HepG2 (cell line): ENCODE measurements at regions of chr9 and their contacts with region 1.

Region 1: DNA sequence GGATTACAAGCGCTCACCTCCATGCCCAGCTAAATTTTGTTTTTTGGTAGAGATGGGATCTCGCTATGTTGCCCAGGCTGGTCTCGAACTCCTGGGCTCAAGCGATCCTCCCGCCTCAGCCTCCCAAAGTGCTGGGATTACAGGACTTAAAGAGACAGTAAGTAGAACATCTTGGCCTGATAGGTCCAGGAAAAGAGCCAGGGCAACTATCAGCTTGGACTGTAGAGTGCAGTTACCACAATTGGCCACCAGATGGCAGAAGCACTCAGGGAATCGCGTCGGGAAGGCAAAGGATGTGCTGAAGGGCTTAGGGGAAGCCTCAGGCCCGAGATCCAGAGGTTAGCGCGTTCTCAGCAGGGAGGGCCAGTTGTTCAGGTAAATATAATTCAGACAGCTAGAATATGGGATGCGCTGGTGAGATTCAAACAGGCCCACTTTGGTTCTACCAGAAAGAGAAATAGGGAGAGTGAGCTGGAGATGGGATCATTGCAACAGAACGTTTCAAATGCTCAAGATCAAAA is 21.5 kb downstream of the C9orf57 start:
- DNase-seq: peak; percentile 56
- ATAC-seq: peak; percentile 89
- H3K4me3 ChIP-seq: no peak overlapping the region
- H3K27ac ChIP-seq: no peak overlapping the region
- H3K4me1 ChIP-seq: peaks cover 33% of the 10 kb centered on the region
- H3K27me3 ChIP-seq: peaks cover 0 to 9% of the 10 kb centered on the region in 2 experiments; a peak in 1 of 5 replicates
- CTCF ChIP-seq: peak; percentile 99
- EP300 ChIP-seq: no peak
- POLR2A ChIP-seq: no peak
- RAD21 ChIP-seq: peak; percentile 96

Region 2: GRCh38 chr9:71795097-71795813 is 243.7 kb before region 1 on chr9:
- CTCF ChIA-PET with region 1: no interaction called
- POLR2A ChIA-PET with region 1: no interaction called
- in situ Hi-C with region 1: no loop called
- intact Hi-C with region 1: no loop called
- DNase-seq: no peak
- ATAC-seq: no peak
- H3K4me3 ChIP-seq: no peak overlapping the region
- H3K27ac ChIP-seq: no peak overlapping the region
- H3K4me1 ChIP-seq: peaks cover 35% of the 10 kb centered on the region
- H3K27me3 ChIP-seq: no peaks in the 10 kb centered on the region
- CTCF ChIP-seq: no peak
- EP300 ChIP-seq: no peak
- POLR2A ChIP-seq: no peak
- RAD21 ChIP-seq: no peak

Region 3: DNA sequence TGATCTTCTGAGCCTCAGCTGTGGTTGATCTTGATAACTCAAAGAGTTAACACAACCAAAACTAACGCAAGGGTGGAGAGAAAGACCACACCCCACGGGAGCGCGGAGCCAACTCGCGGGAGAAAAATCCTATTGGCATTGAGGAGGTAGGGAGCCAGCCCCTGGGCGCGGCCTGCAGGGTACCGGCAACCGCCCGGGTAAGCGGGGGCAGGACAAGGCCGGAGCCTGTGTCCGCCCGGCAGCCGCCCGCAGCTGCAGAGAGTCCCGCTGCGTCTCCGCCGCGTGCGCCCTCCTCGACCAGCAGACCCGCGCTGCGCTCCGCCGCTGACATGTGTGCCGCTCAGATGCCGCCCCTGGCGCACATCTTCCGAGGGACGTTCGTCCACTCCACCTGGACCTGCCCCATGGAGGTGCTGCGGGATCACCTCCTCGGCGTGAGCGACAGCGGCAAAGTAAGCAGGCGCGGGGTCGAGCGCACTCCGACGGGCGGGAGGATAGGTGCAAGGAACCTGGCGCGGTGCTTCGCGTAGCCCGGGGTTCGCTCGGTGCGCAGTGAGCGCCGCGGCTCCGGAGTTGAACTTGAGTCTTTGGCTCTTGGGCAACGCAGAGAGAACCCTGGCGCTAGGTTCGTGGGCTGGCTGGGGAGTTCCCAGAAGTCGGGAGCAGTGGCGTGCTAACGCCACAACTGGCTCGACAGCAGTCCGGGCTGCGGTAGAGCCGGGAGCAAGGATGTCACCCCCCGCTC is 110.5 kb after region 1 on chr9 and contains the start of gene GDA:
- CTCF ChIA-PET with region 1: no interaction called
- POLR2A ChIA-PET with region 1: no interaction called
- in situ Hi-C with region 1: loop called (anchors 25 kb)
- intact Hi-C with region 1: loop called (anchors 1 kb)
- DNase-seq: no peak
- ATAC-seq: peak; percentile 86
- H3K4me3 ChIP-seq: peak within 1 kb of the TSS in 2 of 3 experiments; percentile 45 to 70; a peak in 4 of 6 replicates
- H3K27ac ChIP-seq: no peak within 1 kb of the TSS
- H3K4me1 ChIP-seq: peaks cover 26% of the 10 kb centered on the region
- H3K27me3 ChIP-seq: peaks cover 1 to 26% of the 10 kb centered on the region in 2 experiments; a peak in 3 of 5 replicates
- CTCF ChIP-seq: peak; percentile 48
- EP300 ChIP-seq: no peak
- POLR2A ChIP-seq: no peak
- RAD21 ChIP-seq: peak; percentile 29; the same call in 1 of the 2 replicates
- total RNA-seq, gene GDA: 0.15 and 0.21 TPM in 2 replicates

Region 4: DNA sequence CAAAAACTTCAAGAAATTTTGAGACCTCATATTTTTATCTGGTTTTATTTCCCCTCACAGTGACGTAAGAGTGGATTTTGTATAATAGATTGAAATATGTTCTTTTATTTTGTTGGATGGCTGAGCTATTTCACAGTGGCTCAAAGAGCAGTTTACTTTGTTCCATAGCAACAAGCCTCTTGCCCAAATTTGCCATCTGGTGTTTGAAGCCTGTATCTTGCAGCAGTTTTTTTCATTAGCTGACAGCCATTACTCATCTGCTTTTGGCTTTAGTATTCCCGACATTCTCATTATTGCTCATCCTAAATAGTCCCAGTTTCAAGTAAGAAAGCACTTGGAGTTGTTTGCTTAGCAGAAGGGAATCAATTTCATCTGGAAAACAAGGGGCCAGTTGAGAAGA is 146.6 kb after region 1 on chr9:
- CTCF ChIA-PET with region 1: no interaction called
- POLR2A ChIA-PET with region 1: no interaction called
- in situ Hi-C with region 1: no loop called
- intact Hi-C with region 1: loop called (anchors 1 kb)
- DNase-seq: no peak
- ATAC-seq: peak; percentile 47; the same call in 2 of the 3 replicates
- H3K4me3 ChIP-seq: no peak overlapping the region
- H3K27ac ChIP-seq: no peak overlapping the region
- H3K4me1 ChIP-seq: no peaks in the 10 kb centered on the region
- H3K27me3 ChIP-seq: no peaks in the 10 kb centered on the region
- CTCF ChIP-seq: no peak
- EP300 ChIP-seq: no peak
- POLR2A ChIP-seq: no peak
- RAD21 ChIP-seq: no peak

Region 5: DNA sequence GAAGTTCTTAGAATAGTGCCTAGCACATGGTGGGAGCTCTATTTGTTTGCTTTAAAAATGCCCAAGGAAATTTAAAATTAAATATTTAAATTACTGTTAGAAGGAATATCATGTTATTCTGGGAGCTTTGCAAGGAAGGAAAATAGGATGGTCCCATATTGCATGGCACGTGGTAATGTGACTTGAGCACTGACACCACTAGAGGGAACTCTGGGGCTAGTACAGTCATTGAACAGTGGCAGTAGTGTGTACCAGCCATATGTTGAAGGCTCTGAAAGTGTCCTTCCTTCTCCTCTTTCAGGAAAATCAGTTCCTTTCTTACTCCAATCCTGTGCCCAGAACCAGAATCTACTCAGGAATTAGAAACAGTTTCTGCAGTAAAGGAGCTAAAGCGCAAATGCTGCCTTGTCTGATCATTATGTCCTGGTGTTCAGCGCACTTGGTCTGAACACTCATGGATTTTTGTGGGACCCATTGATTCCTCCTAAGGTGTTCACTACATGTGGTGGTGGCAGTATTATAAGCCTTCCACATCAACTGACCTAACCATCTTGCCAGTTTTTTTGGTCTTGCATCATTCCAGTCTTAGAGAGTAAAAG is 164.4 kb after region 1 on chr9:
- CTCF ChIA-PET with region 1: interaction called, 3 read pairs
- POLR2A ChIA-PET with region 1: no interaction called
- in situ Hi-C with region 1: no loop called
- intact Hi-C with region 1: loop called (anchors 1 kb)
- DNase-seq: peak; percentile 53
- ATAC-seq: peak; percentile 99
- H3K4me3 ChIP-seq: no peak overlapping the region
- H3K27ac ChIP-seq: no peak overlapping the region
- H3K4me1 ChIP-seq: peaks cover 16% of the 10 kb centered on the region
- H3K27me3 ChIP-seq: no peaks in the 10 kb centered on the region
- CTCF ChIP-seq: peak; percentile 79
- EP300 ChIP-seq: no peak
- POLR2A ChIP-seq: no peak
- RAD21 ChIP-seq: 0 out of 2 replicates have a peak, but pooled peaks have one; percentile 20

Region 6: DNA sequence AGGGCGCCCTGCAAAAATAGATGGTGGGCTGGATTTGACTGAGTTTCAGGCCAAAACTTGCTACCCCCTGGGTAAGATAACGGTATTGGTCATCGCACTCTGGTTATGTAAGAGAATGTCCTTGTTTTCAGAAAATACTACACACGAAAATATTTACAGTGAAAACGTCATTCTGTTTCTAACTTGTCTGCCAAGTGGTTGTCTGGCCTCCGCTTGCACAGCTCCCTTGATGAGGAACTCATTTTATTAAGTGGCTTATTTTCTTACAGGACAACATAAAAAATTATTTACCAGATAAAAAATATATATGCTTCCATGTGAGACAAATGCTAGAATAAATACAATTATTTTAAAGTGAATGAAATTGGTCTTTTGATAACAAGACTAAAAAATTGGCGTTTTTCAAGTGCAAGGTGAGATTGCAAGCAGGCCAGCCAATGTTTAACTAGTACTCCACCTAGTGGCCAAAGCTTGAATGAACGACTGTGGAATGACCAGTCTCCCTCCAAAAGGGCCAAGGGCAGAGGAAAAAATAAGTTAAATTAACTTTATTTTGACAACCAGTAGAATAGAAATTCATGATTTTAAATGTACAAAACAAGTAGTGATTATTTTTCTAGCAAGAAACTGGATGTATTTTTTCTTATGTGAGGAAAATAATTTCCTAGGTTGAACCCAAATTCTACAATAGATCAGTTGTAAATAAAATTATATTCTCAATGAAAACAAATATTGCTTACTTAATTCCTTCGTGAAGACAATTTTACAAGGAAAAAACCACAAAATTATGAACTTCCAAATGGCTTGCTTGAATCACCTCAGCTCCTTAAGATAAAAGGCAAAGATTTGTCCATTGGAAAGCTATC is 232.9 kb after region 1 on chr9:
- CTCF ChIA-PET with region 1: interaction called, 51 read pairs
- POLR2A ChIA-PET with region 1: no interaction called
- in situ Hi-C with region 1: loop called (anchors 5 kb)
- intact Hi-C with region 1: loop called (anchors 1 kb)
- DNase-seq: peak; percentile 46
- ATAC-seq: peak; percentile 73
- H3K4me3 ChIP-seq: no peak overlapping the region
- H3K27ac ChIP-seq: no peak overlapping the region
- H3K4me1 ChIP-seq: no peaks in the 10 kb centered on the region
- H3K27me3 ChIP-seq: no peaks in the 10 kb centered on the region
- CTCF ChIP-seq: peak; percentile 81
- EP300 ChIP-seq: no peak
- POLR2A ChIP-seq: no peak
- RAD21 ChIP-seq: peak; percentile 62; the same call in 1 of the 2 replicates

Region 7: GRCh38 chr9:72592502-72593403 is 553.8 kb after region 1 on chr9:
- CTCF ChIA-PET with region 1: no interaction called
- POLR2A ChIA-PET with region 1: no interaction called
- in situ Hi-C with region 1: loop called (anchors 25 kb)
- intact Hi-C with region 1: loop called (anchors 1 kb)
- DNase-seq: peak; percentile 30
- ATAC-seq: peak; percentile 89
- H3K4me3 ChIP-seq: no peak overlapping the region
- H3K27ac ChIP-seq: no peak overlapping the region
- H3K4me1 ChIP-seq: no peaks in the 10 kb centered on the region
- H3K27me3 ChIP-seq: no peaks in the 10 kb centered on the region; a peak in 1 of 5 replicates
- CTCF ChIP-seq: peak; percentile 78
- EP300 ChIP-seq: no peak
- POLR2A ChIP-seq: no peak
- RAD21 ChIP-seq: peak; percentile 66

Region 8: DNA sequence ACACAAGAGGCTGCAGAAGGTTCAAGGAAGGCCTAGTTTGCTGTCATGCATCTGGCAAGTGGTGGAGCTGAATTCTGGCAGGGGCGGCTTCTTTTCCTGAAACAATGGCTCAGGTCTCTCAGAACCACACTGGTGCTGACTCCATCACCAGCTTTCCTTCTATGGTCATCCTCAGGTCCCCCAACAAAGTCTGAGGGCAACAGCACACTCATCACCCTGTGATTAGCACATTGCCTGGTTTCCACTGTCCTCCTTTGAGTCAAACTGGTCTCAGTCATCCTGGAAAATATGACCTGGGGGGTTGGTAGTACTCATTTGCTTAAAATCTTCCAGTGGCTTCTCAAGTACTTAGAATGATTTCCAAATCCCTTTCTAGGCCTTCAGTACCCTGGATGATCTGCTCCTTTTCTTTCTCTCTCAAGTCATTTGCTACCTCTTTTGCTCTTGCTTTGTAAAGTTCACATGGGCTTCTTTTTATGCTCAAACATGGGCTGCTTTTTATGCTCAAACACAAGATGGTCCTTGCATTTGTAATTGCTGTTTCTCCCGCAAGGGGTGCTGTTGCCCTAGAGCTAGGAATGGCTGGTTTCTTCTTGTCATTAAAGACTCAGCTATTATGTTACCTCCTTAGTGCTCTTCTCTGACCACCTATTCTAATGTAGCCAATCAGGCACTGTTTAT is 769.0 kb after region 1 on chr9:
- CTCF ChIA-PET with region 1: no interaction called
- POLR2A ChIA-PET with region 1: no interaction called
- in situ Hi-C with region 1: loop called (anchors 25 kb)
- intact Hi-C with region 1: no loop called
- DNase-seq: peak; percentile 22
- ATAC-seq: peak; percentile 69
- H3K4me3 ChIP-seq: no peak overlapping the region
- H3K27ac ChIP-seq: no peak overlapping the region
- H3K4me1 ChIP-seq: peaks cover 11% of the 10 kb centered on the region; the same call in 1 of the 2 replicates
- H3K27me3 ChIP-seq: peaks cover 0 to 6% of the 10 kb centered on the region in 2 experiments; a peak in 1 of 5 replicates
- CTCF ChIP-seq: peak; percentile 63
- EP300 ChIP-seq: no peak
- POLR2A ChIP-seq: no peak
- RAD21 ChIP-seq: no peak